ENCODE measurements at regions of chr5 and their contacts with region 1.

Region 1: GRCh38 chr5:14351845-14352712 is 208.9 kb downstream of the TRIO start:
- DNase-seq: peak; percentile 68
- H3K27ac ChIP-seq: no peak overlapping the region
- CTCF ChIP-seq: peak; percentile 97

Region 2: DNA sequence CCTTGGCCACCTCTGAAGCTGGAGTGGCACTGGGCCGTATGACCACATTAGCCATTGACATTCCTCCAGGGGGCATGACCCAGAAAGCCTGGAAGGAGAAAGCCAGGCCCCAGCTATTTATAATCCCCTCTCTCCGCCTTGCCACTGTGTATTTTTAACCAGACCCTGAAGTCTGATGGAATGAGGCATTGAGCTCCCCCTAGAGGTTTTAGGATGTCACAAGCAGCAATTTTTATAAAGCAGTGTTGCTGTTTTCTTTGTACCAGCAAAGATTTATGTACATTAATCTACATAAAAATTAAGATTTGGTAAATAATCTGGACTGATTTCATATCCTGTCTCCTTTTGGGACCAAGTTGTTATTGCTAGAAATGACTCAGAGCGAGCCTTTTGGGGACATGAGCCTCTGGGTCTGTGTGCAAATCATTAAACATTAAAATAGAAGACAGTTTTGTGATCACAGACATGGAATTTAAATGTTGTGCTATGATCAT is 81.8 kb before region 1 on chr5:
- CTCF ChIA-PET with region 1: no interaction called
- POLR2A ChIA-PET with region 1: no interaction called
- DNase-seq: peak; percentile 78
- H3K27ac ChIP-seq: peak overlapping the region; percentile 48
- CTCF ChIP-seq: peak; percentile 88

Region 3: DNA sequence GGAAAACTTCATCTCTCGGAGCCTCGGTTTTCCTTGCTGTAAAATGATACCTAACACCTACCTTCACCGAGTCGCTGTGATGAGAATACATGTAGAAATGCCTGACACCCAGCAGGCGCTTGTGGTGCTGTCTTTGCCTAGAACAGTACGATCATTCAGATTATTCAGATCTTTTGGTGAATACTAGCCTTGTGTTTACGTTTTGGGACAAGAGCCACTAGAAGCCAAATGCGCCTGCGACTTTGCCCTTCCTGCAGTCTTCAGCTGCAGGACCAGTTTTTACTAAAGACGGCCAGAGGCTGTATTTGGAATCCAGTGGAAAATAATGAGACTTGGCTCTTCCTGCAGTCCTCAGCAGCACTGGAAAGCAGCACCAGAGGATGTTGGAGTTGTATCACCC is 19.3 kb before region 1 on chr5:
- CTCF ChIA-PET with region 1: no interaction called
- POLR2A ChIA-PET with region 1: no interaction called
- DNase-seq: no peak
- H3K27ac ChIP-seq: no peak overlapping the region
- CTCF ChIP-seq: no peak

Region 4: DNA sequence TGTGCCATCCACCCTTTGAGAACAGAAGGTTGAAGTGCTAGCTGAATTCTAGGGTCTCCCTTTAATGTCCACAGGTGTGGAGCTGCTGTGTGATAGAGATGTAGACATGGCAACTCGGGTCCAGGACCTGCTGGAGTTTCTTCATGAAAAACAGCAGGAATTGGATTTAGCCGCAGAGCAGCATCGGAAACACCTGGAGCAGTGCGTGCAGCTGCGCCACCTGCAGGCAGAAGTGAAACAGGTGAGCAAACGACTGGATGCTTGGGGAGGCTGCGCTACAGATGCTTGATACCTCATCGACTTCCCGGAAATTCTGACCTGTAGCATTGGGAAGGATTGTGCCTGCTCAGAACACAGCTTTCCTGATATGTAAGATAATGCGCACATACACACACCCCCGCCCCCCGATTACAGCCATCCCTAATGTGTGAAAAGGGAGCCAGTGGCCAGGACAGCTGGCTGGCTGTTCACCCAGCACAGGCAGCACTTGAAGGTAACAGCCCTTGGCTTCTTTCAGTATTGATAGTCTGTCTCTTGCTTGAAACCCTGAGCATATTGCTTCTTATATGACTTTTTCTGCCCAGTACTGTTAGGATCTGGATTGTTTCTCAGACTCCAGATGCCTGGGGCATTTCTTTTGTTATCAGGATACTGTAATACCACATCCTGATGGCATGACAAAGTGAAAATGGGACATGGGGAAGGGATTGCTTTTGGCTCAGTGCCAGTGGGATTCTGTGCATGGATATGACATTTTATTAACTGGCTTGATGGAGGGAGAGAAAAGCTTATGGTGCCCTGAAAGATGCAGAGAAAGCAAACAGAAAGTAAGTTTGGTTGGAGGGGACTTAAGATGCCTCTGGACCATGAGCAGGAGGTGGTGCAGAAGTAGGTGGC is 12.7 kb after region 1 on chr5:
- CTCF ChIA-PET with region 1: interaction called, 11 read pairs
- POLR2A ChIA-PET with region 1: no interaction called
- DNase-seq: peak; percentile 15
- H3K27ac ChIP-seq: no peak overlapping the region
- CTCF ChIP-seq: peak; percentile 80

Region 5: DNA sequence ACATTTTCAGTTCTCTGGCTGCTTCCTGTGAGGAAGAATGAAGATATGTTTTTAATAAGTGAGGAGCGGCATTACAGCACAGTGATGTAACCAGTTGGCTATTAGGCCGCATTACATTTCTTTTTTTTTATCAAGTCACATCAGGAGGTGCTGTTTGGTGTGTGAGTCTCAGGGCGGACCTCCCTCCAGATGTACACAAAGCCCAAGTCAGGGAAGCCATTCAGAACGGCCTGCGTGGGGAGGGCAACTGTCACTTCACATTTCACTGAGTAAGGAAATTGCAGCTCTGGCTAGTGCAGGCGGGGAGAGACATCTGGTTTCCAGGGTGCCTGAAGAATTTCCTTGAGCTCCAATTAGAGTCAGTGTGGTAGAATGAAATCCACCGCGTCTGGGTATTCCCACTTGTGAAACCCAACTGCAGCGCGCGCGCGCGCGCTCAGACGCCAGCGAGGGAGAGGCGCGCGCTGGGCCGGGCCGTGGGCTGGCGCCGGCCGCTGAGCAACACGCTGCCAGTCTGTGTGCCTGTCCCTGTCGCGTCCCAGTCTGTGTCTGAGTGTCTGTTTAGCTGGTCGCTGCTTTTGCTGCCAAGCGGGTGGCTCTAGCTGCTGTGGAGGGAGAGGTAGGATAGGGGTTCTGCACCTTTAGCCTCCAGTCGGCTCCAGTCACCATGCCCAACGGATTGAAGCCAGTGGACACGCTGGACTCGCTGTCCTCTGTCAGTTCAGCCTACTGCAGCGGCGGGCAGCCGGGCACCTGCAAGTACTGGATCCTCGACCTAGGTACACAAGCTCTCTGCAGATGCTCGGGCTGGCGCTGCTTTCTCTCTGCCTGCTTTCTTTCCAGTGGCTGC is 88.7 kb after region 1 on chr5:
- CTCF ChIA-PET with region 1: no interaction called
- POLR2A ChIA-PET with region 1: no interaction called
- DNase-seq: no peak
- H3K27ac ChIP-seq: no peak overlapping the region
- CTCF ChIP-seq: no peak

Region 6: GRCh38 chr5:14644623-14645237 is 292.7 kb after region 1 on chr5:
- CTCF ChIA-PET with region 1: interaction called, 13 read pairs
- POLR2A ChIA-PET with region 1: no interaction called
- DNase-seq: no peak
- H3K27ac ChIP-seq: no peak overlapping the region
- CTCF ChIP-seq: no peak

Region 7: GRCh38 chr5:14830210-14831005 is 478.3 kb after region 1 on chr5:
- CTCF ChIA-PET with region 1: no interaction called
- POLR2A ChIA-PET with region 1: no interaction called
- DNase-seq: no peak
- H3K27ac ChIP-seq: no peak overlapping the region
- CTCF ChIP-seq: no peak

Measured in RWPE1 (cell line).